ENCODE measurements at regions of chr1 and their contacts with region 1.

Region 1: GRCh38 chr1:183891158-183891856 is 86.4 kb downstream of the RGL1 start:
- DNase-seq: no peak
- ATAC-seq: no peak
- H3K4me3 ChIP-seq: no peak overlapping the region
- H3K27ac ChIP-seq: peak overlapping the region in 2 of 10 donors; percentile 23 to 70
- H3K4me1 ChIP-seq: peaks cover 0 to 86% (median 25%) of the 10 kb centered on the region in 9 donors
- H3K27me3 ChIP-seq: no peaks in the 10 kb centered on the region
- CTCF ChIP-seq: no peak

Region 2: GRCh38 chr1:183804881-183805841 is 86.1 kb before region 1 on chr1 and contains the start of gene RGL1:
- intact Hi-C with region 1: loop called in 2 of 10 experiments (anchors 5 kb)
- DNase-seq: peak; percentile 70 to 76
- ATAC-seq: peak; percentile 86 to 96 (median 91)
- H3K4me3 ChIP-seq: peak within 1 kb of the TSS; percentile 55 to 73 (median 66)
- H3K27ac ChIP-seq: peak within 1 kb of the TSS; percentile 70 to 89 (median 80)
- H3K4me1 ChIP-seq: peaks cover 0 to 50% (median 30%) of the 10 kb centered on the region in 9 donors
- H3K27me3 ChIP-seq: no peaks in the 10 kb centered on the region
- CTCF ChIP-seq: no peak
- total RNA-seq, gene RGL1: 12.6 to 33.4 (median 18.9) TPM

Region 3: DNA sequence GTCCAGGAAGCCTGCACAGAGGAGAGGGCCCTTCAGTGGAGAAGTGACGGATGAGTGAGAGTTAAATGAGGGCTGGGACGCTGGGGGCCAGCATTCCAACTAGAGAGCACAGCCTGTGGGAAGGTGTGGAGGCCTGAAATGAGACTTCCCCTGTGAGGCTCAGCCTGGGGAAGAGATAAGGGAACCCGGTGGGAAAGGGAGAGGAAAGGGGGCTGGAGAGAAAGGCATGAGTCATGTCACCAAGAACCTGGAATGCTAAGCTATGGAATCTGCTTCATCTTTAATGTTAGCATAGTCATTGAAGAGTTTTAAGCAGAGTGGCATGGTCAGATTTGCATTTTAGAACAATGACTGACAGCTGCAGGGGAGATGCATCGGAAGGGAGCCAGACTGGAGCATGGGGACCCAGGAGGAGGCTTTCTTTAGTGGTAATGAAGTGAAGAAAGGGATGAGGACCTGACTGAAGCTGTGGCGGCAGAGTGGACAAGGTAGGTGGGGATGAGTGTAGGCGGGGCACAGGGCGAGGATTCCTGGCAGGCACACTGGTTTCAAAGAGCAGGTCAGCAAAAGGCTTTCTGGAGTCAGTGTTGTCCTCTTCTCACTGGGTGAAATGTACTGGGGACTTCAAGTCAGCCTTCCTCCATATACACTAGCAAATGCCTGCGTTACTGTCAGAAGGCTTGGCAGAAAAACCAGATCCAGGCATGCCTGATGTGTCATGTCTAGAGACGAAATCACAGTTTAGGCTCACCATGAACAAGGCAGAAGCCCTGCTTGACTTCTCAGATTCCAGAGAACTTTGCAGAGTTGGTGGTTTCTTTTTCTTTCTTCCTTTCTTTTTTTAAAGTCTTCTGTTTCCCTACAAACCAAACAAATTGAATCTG is 78.4 kb before region 1 on chr1:
- intact Hi-C with region 1: loop called in 2 of 10 experiments (anchors 5 kb)
- DNase-seq: no peak
- ATAC-seq: peak in 6 of 8 donors; percentile 20 to 70 (median 46)
- H3K4me3 ChIP-seq: peak overlapping the region in 1 of 10 donors; percentile 2
- H3K27ac ChIP-seq: peak overlapping the region in 5 of 10 donors; percentile 5 to 41 (median 33)
- H3K4me1 ChIP-seq: peaks cover 4 to 99% (median 85%) of the 10 kb centered on the region in 9 donors
- H3K27me3 ChIP-seq: no peaks in the 10 kb centered on the region
- CTCF ChIP-seq: no peak

Region 4: DNA sequence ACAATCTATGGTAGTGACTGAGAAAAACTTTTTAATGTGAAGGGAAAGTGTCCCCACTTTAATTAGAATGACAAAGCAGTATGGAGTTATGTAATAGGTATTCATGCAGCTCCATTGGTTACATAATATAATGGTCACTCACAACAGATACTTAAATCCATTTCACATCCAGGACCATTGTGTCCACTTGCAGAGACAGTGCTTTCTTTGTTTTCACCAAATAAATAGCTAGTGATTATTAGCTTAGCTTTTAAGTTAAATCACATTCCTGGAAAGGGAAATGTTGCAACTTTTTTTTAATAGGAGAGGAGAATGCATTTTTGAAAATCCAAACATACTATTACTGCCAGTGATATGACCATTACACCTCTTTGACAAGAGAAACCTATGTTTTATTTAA is 63.5 kb before region 1 on chr1:
- intact Hi-C with region 1: loop called in 1 of 10 experiments (anchors 5 kb)
- DNase-seq: no peak
- ATAC-seq: no peak
- H3K4me3 ChIP-seq: no peak overlapping the region
- H3K27ac ChIP-seq: no peak overlapping the region
- H3K4me1 ChIP-seq: peaks cover 0 to 64% (median 31%) of the 10 kb centered on the region in 9 donors
- H3K27me3 ChIP-seq: no peaks in the 10 kb centered on the region
- CTCF ChIP-seq: no peak

Region 5: GRCh38 chr1:183841950-183842794 is 49.1 kb before region 1 on chr1:
- intact Hi-C with region 1: no loop called
- DNase-seq: peak in 1 of 2 donors; percentile 32
- ATAC-seq: peak; percentile 72 to 92 (median 84)
- H3K4me3 ChIP-seq: peak overlapping the region in 7 of 10 donors; percentile 2 to 27 (median 10)
- H3K27ac ChIP-seq: peak overlapping the region; percentile 34 to 84 (median 58)
- H3K4me1 ChIP-seq: peaks cover 3 to 66% (median 41%) of the 10 kb centered on the region in 9 donors
- H3K27me3 ChIP-seq: no peaks in the 10 kb centered on the region
- CTCF ChIP-seq: no peak

Measured in heart right ventricle (tissue), 16 donors.